ENCODE measurements at regions of chr6 and their contacts with region 1.

Region 1: GRCh38 chr6:98834060-98835031 is at the start of gene POU3F2:
- DNase-seq: peak; percentile 85
- ATAC-seq: peak; percentile 85
- H3K4me3 Mint-ChIP-seq: peak within 1 kb of the TSS; percentile 75
- H3K27ac Mint-ChIP-seq: no peak within 1 kb of the TSS
- H3K4me1 Mint-ChIP-seq: peaks cover 43% of the 10 kb centered on the region
- H3K27me3 Mint-ChIP-seq: peaks cover 64% of the 10 kb centered on the region
- total RNA-seq, gene POU3F2: not detected

Region 2: GRCh38 chr6:98816799-98817198 is 17.5 kb before region 1 on chr6:
- CTCF ChIA-PET with region 1: no interaction called
- POLR2A ChIA-PET with region 1: no interaction called
- intact Hi-C with region 1: no loop called
- DNase-seq: no peak
- ATAC-seq: no peak
- H3K4me3 Mint-ChIP-seq: no peak overlapping the region
- H3K27ac Mint-ChIP-seq: no peak overlapping the region
- H3K4me1 Mint-ChIP-seq: no peaks in the 10 kb centered on the region
- H3K27me3 Mint-ChIP-seq: peaks cover 38% of the 10 kb centered on the region

Region 3: GRCh38 chr6:99563056-99563723 is 728.8 kb after region 1 on chr6:
- CTCF ChIA-PET with region 1: no interaction called
- POLR2A ChIA-PET with region 1: no interaction called
- intact Hi-C with region 1: no loop called
- DNase-seq: no peak
- ATAC-seq: no peak
- H3K4me3 Mint-ChIP-seq: no peak overlapping the region
- H3K27ac Mint-ChIP-seq: no peak overlapping the region
- H3K4me1 Mint-ChIP-seq: peaks cover 26% of the 10 kb centered on the region
- H3K27me3 Mint-ChIP-seq: no peaks in the 10 kb centered on the region

Region 4: GRCh38 chr6:99603421-99604165 is 769.2 kb after region 1 on chr6:
- CTCF ChIA-PET with region 1: interaction called, 3 read pairs
- POLR2A ChIA-PET with region 1: no interaction called
- intact Hi-C with region 1: loop called in 1 of 2 experiments (anchors 5 kb)
- DNase-seq: peak; percentile 56
- ATAC-seq: peak; percentile 51
- H3K4me3 Mint-ChIP-seq: peak overlapping the region; percentile 51
- H3K27ac Mint-ChIP-seq: no peak overlapping the region
- H3K4me1 Mint-ChIP-seq: peaks cover 30% of the 10 kb centered on the region
- H3K27me3 Mint-ChIP-seq: peaks cover 79% of the 10 kb centered on the region

Region 5: GRCh38 chr6:100455230-100456124 is 1621.1 kb after region 1 on chr6:
- CTCF ChIA-PET with region 1: no interaction called
- POLR2A ChIA-PET with region 1: no interaction called
- intact Hi-C with region 1: loop called (anchors 5 to 10 kb)
- DNase-seq: no peak
- ATAC-seq: no peak
- H3K4me3 Mint-ChIP-seq: no peak overlapping the region
- H3K27ac Mint-ChIP-seq: no peak overlapping the region
- H3K4me1 Mint-ChIP-seq: no peaks in the 10 kb centered on the region
- H3K27me3 Mint-ChIP-seq: peaks cover 58% of the 10 kb centered on the region